ENCODE measurements at regions of chr11 and their contacts with region 1.

Region 1: GRCh38 chr11:73995247-73995646 is 12.6 kb upstream of the UCP2 start:
- DNase-seq: no peak
- H3K4me3 Mint-ChIP-seq: peak overlapping the region; percentile 44
- H3K27ac Mint-ChIP-seq: peak overlapping the region; percentile 87
- H3K4me1 Mint-ChIP-seq: peaks cover 70% of the 10 kb centered on the region
- H3K27me3 Mint-ChIP-seq: no peaks in the 10 kb centered on the region

Region 2: DNA sequence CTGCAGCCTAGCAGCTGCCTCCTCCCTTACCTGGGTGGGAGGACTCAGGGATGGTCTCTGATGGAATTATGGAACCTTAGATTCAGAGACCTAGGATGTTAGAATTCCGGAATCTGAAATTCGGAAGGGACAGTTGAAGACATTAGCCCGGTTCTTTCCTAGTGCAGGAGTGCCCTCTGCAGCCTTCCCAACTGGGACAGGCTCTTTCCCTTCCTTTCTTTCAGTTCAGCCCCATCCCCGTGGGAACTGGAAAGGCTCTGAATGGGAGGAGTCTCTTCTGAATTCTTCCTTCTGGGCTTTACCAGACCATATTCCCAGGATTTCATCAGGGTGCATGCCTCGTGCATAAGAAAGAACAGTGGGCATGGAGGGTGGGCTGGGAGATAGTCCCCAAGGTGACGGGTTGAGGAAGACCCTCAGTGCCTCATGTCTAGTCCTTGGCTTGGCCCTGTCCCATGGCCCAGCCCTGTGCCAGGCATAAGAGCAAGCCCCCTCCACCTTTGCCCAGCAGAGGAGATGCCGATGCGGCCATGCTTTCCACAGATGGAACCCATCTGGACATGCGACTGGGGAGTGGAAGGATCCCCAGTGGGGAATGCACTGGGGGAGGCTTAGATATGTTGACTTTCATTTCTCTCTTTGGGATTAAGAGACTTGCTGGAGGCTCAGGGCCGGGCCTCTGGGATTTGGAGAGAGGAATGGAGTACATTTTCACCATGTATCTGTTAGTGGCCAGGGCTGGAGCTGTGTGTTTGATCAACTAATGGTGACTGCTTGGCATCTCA is 30.0 kb before region 1 on chr11:
- CTCF ChIA-PET with region 1: interaction called, 5 read pairs
- POLR2A ChIA-PET with region 1: interaction called, 20 read pairs
- DNase-seq: no peak
- H3K4me3 Mint-ChIP-seq: no peak overlapping the region
- H3K27ac Mint-ChIP-seq: no peak overlapping the region
- H3K4me1 Mint-ChIP-seq: peaks cover 31% of the 10 kb centered on the region
- H3K27me3 Mint-ChIP-seq: peaks cover 2% of the 10 kb centered on the region

Region 3: GRCh38 chr11:74011360-74012073 is 16.3 kb after region 1 on chr11:
- CTCF ChIA-PET with region 1: interaction called, 3 read pairs
- POLR2A ChIA-PET with region 1: interaction called, 34 read pairs
- DNase-seq: peak; percentile 56
- H3K4me3 Mint-ChIP-seq: no peak overlapping the region
- H3K27ac Mint-ChIP-seq: peak overlapping the region; percentile 86
- H3K4me1 Mint-ChIP-seq: peaks cover 84% of the 10 kb centered on the region
- H3K27me3 Mint-ChIP-seq: no peaks in the 10 kb centered on the region

Region 4: GRCh38 chr11:74018331-74019005 is 23.2 kb after region 1 on chr11:
- CTCF ChIA-PET with region 1: no interaction called
- POLR2A ChIA-PET with region 1: interaction called, 34 read pairs
- DNase-seq: no peak
- H3K4me3 Mint-ChIP-seq: no peak overlapping the region
- H3K27ac Mint-ChIP-seq: no peak overlapping the region
- H3K4me1 Mint-ChIP-seq: peaks cover 51% of the 10 kb centered on the region
- H3K27me3 Mint-ChIP-seq: no peaks in the 10 kb centered on the region